ENCODE measurements at regions of chr5 and their contacts with region 1.

Region 1: GRCh38 chr5:76986825-76987526 is 34.1 kb downstream of the CRHBP start:
- DNase-seq: peak in 1 of 3 donors; percentile 16
- H3K4me3 ChIP-seq: no peak overlapping the region
- H3K27ac ChIP-seq: no peak overlapping the region
- H3K4me1 ChIP-seq: peaks cover 0 to 5% (median 0%) of the 10 kb centered on the region in 4 experiments
- H3K27me3 ChIP-seq: no peaks in the 10 kb centered on the region

Region 2: GRCh38 chr5:76608833-76609232 is 378.1 kb before region 1 on chr5:
- CTCF ChIA-PET with region 1: no interaction called
- POLR2A ChIA-PET with region 1: no interaction called
- DNase-seq: peak; percentile 39 to 65 (median 60)
- H3K4me3 ChIP-seq: no peak overlapping the region
- H3K27ac ChIP-seq: peak overlapping the region in 1 of 2 experiments; percentile 47
- H3K4me1 ChIP-seq: peaks cover 0 to 20% (median 5%) of the 10 kb centered on the region in 4 experiments
- H3K27me3 ChIP-seq: no peaks in the 10 kb centered on the region

Region 3: GRCh38 chr5:76974785-76975184 is 12.2 kb before region 1 on chr5:
- CTCF ChIA-PET with region 1: interaction called, 15 read pairs
- POLR2A ChIA-PET with region 1: no interaction called
- DNase-seq: peak in 2 of 3 donors; percentile 30 to 38
- H3K4me3 ChIP-seq: no peak overlapping the region
- H3K27ac ChIP-seq: no peak overlapping the region
- H3K4me1 ChIP-seq: peaks cover 5 to 11% (median 7%) of the 10 kb centered on the region in 4 experiments
- H3K27me3 ChIP-seq: no peaks in the 10 kb centered on the region

Measured in common myeloid progenitor, CD34-positive (primary cell).